CD14-positive monocyte (primary cell): ENCODE measurements at regions of chr5 and their contacts with region 1.

Region 1: GRCh38 chr5:157575381-157576020 is at the start of gene ADAM19:
- DNase-seq: peak in 1 of 3 donors; percentile 45
- H3K4me3 ChIP-seq: peak within 1 kb of the TSS; percentile 51 to 90 (median 66)
- H3K4me3 Mint-ChIP-seq: peak within 1 kb of the TSS; percentile 99 to 100
- H3K27ac ChIP-seq: peak within 1 kb of the TSS; percentile 43 to 83
- H3K27ac Mint-ChIP-seq: peak within 1 kb of the TSS; percentile 76 to 96 (median 90)
- H3K4me1 ChIP-seq: peaks cover 52 to 61% of the 10 kb centered on the region in 2 donors
- H3K4me1 Mint-ChIP-seq: peaks cover 54% of the 10 kb centered on the region
- H3K27me3 ChIP-seq: no peaks in the 10 kb centered on the region
- H3K27me3 Mint-ChIP-seq: peaks cover 2 to 7% (median 6%) of the 10 kb centered on the region in 3 donors
- CTCF ChIP-seq: no peak
- polyA plus RNA-seq, gene ADAM19: 3.0 to 12.7 (median 6.2) TPM

Region 2: GRCh38 chr5:157596487-157596886 is 21.0 kb after region 1 on chr5:
- intact Hi-C with region 1: loop called in 1 of 2 experiments (anchors 2 kb)
- DNase-seq: peak in 1 of 3 donors; percentile 39
- H3K4me3 ChIP-seq: no peak overlapping the region
- H3K4me3 Mint-ChIP-seq: no peak overlapping the region
- H3K27ac ChIP-seq: no peak overlapping the region
- H3K27ac Mint-ChIP-seq: peak overlapping the region in 2 of 7 donors; percentile 10 to 71
- H3K4me1 ChIP-seq: peaks cover 51 to 66% of the 10 kb centered on the region in 2 donors
- H3K4me1 Mint-ChIP-seq: peaks cover 56% of the 10 kb centered on the region
- H3K27me3 ChIP-seq: no peaks in the 10 kb centered on the region
- H3K27me3 Mint-ChIP-seq: peaks cover under 1 to 8% (median 2%) of the 10 kb centered on the region in 3 donors
- CTCF ChIP-seq: no peak

Region 3: DNA sequence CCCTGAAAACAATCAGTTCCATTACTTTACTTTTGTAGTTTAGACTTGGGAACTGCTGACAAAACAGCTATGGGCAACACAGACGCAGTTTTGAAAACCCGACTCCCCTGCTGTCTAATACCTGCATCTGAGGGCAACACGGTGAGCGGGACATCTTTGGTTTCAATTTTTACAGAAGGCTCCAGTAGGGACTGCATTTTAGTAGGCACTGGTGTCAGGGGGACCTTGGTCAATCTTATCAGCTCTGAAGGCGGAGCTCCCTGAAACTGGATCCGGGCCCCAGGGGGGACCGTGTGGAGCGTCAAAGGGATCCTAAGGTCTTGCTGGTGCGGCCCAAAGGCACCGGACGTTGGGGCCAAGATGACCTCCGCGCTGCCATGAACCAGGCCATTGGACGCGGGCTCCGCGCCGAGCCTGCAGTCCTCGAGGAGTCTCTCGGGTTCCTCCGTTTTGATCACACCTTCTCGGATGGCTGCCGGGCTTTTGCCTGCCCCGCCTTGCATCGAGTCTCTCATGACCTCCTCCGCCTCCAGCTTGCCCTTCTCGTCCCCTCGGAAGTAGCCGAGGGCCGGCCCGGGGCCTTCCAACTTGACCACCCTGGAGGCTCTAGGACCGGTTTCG is 75.6 kb after region 1 on chr5:
- intact Hi-C with region 1: no loop called
- DNase-seq: no peak
- H3K4me3 ChIP-seq: peak overlapping the region in 1 of 3 experiments; percentile 71
- H3K4me3 Mint-ChIP-seq: peak overlapping the region in 1 of 2 donors; percentile 84
- H3K27ac ChIP-seq: no peak overlapping the region
- H3K27ac Mint-ChIP-seq: no peak overlapping the region
- H3K4me1 ChIP-seq: peaks cover 13 to 14% of the 10 kb centered on the region in 2 donors
- H3K4me1 Mint-ChIP-seq: peaks cover 11% of the 10 kb centered on the region
- H3K27me3 ChIP-seq: no peaks in the 10 kb centered on the region
- H3K27me3 Mint-ChIP-seq: peaks cover 2 to 18% (median 9%) of the 10 kb centered on the region in 3 donors
- CTCF ChIP-seq: no peak

Region 4: DNA sequence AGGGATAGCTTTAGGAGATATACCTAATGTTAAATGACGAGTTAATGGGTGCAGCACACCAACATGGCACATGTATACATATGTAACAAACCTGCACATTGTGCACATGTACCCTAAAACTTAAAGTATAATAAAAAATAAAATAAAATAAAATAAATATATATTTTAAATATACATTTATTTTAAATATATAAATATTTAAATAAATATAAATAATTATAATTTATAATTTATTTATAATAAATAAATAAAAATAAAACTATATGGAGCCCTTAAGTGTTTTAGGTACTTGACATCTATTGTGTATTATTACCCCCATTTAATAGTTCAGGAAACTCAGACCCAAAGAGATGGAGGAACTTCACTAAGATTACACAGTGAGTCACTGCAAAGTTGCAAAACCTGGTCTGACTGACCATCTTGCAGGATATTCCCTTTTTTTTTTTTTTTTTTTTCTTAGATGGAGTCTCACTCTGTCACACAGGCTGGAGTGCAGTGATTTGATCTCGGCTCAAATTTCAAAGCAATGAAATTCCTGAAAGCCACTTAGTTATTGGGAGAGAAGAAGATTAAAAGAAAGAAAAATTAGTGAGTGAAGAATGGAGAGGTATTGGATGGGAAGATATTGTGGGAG is 90.1 kb after region 1 on chr5:
- intact Hi-C with region 1: loop called in 1 of 2 experiments (anchors 10 kb)
- DNase-seq: peak; percentile 84 to 97 (median 95)
- H3K4me3 ChIP-seq: no peak overlapping the region
- H3K4me3 Mint-ChIP-seq: peak overlapping the region in 1 of 2 donors; percentile 76
- H3K27ac ChIP-seq: peak overlapping the region in 1 of 2 donors; percentile 16
- H3K27ac Mint-ChIP-seq: peak overlapping the region; percentile 28 to 93 (median 83)
- H3K4me1 ChIP-seq: peaks cover 10 to 12% of the 10 kb centered on the region in 2 donors
- H3K4me1 Mint-ChIP-seq: peaks cover 18% of the 10 kb centered on the region
- H3K27me3 ChIP-seq: peaks cover 0 to 10% of the 10 kb centered on the region in 2 donors
- H3K27me3 Mint-ChIP-seq: peaks cover 14 to 26% (median 22%) of the 10 kb centered on the region in 3 donors
- CTCF ChIP-seq: no peak